Left lung (tissue), 14 donors: ENCODE measurements at regions of chr11 and their contacts with region 1.

Region 1: DNA sequence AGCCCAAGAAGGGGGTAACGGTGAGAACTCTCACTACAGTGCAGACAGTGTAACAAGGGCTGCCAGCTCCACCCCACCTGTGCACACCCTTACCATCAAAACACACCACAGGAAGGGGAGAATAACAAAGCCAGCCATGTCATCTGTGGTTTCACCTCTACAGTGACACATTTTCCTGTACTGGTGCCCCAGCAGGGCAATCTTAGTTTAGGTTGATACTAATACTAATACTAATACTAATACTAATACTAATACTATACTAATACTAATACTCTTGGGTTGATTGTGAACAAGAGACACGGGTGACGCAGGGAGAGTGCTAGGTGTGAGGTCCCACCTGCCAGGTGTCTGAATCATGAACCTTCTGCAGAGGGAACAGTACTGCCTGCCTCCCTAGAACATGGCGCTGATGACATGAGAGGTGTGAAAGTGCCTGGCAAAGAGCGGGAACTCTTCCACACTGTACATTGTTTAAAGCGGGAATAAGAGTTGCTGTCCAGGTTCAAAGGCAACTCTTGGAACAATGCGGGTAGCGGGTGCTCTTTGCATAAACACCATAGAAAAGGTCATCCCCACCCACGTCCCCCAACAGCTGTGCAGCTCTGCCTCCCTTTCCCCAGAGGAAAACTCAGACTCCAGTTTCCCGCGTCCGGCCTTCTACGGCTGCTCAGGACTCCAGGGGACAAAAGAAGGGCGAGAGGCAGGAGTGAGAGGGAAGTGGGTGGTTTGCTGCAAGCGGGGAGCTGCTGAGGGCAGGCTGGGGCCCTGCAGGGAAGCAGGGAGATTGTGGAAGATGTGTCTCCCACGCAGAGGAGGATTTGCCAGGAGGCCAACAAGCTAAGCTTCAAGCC is 25.0 kb upstream of the TMPRSS4 start:
- DNase-seq: no peak
- ATAC-seq: no peak
- H3K4me3 ChIP-seq: no peak overlapping the region
- H3K27ac ChIP-seq: no peak overlapping the region
- H3K4me1 ChIP-seq: peaks cover 0 to 11% of the 10 kb centered on the region in 2 donors
- H3K27me3 ChIP-seq: no peaks in the 10 kb centered on the region
- CTCF ChIP-seq: no peak

Region 2: DNA sequence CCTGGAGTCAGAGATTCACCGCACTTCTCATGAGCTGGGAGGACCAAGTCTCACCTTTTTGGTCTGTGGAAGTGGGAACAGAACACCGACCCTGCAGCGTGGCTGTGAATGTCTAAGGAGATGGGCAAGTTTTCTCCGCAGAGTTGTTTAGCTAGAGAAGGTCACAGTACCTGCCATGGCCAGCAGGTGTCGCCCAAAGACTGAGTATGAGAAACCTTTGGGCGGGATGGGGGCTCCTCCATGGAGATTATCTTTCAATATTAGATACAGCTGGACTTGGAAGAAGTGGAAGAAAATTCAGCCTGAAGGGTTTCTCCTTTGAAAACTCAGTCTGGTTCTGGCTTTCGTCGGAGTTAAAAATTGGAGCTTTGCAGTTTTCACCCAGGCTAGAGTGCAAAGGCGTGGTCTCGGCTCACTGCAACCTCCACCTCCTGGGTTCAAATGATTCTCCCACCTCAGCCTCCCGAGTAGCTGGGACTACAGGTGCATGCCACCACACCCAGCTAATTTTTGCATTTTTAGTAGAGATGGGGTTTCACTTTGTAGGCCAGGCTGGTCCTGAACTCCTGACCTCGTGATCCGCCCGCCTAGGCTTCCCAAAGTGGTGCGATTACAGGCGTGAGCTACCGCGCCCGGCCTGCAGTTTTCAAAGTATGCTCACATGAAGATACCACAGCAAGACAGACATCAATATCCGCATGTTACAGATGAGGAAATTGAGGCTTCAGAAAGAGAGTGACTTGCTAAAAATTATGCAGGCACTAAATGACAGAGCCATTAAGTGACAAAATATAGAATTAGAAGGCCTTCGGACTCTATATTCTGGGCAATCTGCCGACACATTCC is 244.1 kb before region 1 on chr11:
- intact Hi-C with region 1: loop called in 1 of 2 experiments (anchors 5 kb)
- DNase-seq: peak in 3 of 4 donors; percentile 67 to 88 (median 86)
- ATAC-seq: peak; percentile 84
- H3K4me3 ChIP-seq: no peak overlapping the region
- H3K27ac ChIP-seq: no peak overlapping the region
- H3K4me1 ChIP-seq: peaks cover 0 to 43% of the 10 kb centered on the region in 2 donors
- H3K27me3 ChIP-seq: no peaks in the 10 kb centered on the region
- CTCF ChIP-seq: peak; percentile 91 to 94

Region 3: DNA sequence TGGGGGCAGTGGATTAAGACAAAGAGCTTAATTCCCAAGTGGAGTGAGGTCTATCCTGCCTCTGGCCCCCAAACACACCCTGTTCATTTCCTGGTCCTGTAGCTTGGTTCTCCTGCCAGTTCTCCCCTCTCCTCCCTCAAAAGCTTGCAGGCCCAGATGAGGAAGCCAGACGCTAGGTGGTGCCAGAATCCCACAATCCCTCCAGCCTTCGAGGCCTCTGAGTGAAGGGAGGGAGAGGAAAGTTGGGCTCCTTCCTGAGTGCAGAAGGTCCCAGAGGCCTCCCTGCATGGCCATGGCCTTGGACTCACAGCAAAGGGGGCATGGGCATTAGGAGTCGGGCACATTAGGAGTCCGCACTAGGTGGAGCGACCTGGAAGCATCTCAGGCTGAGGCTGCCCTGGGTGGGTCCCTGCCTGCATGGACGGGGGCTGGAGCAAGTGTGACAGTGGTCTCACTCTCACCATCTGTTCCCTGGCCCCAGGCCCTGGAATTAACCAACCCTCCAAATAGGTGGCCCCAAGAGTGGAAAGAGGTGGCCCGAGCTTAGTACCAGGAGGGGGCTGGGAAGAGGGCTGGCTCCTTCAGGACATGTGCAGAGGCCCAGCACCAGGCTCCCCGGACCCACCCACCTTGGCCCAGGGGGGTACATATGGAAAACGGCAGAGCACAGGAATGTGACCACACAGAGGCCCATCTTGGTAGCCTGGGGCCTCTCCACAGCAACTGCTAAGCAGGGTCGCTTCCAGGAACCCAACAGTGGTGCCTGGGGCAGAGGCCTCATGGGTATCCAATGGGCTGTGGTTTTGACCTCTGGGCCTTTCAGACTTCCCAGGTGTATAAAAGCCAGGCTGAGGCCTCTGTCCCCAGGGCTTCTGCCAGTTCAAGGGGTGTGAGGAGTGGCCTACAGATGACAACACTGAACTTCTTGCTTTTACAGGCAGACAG is 232.5 kb before region 1 on chr11:
- intact Hi-C with region 1: loop called in 1 of 2 experiments (anchors 5 kb)
- DNase-seq: peak; percentile 32 to 89 (median 70)
- ATAC-seq: peak; percentile 48
- H3K4me3 ChIP-seq: no peak overlapping the region
- H3K27ac ChIP-seq: no peak overlapping the region
- H3K4me1 ChIP-seq: peaks cover 14 to 77% of the 10 kb centered on the region in 2 donors
- H3K27me3 ChIP-seq: no peaks in the 10 kb centered on the region
- CTCF ChIP-seq: peak; percentile 15 to 37

Region 4: GRCh38 chr11:117946842-117947526 is 104.9 kb before region 1 on chr11:
- intact Hi-C with region 1: loop called in 1 of 2 experiments (anchors 10 kb)
- DNase-seq: peak; percentile 85 to 94 (median 90)
- ATAC-seq: peak; percentile 97
- H3K4me3 ChIP-seq: no peak overlapping the region
- H3K27ac ChIP-seq: no peak overlapping the region
- H3K4me1 ChIP-seq: peaks cover 0 to 55% of the 10 kb centered on the region in 2 donors
- H3K27me3 ChIP-seq: no peaks in the 10 kb centered on the region
- CTCF ChIP-seq: peak; percentile 97 to 99